CD8-positive, alpha-beta T cell (primary cell): ENCODE measurements at regions of chrX and their contacts with region 1.

Region 1: DNA sequence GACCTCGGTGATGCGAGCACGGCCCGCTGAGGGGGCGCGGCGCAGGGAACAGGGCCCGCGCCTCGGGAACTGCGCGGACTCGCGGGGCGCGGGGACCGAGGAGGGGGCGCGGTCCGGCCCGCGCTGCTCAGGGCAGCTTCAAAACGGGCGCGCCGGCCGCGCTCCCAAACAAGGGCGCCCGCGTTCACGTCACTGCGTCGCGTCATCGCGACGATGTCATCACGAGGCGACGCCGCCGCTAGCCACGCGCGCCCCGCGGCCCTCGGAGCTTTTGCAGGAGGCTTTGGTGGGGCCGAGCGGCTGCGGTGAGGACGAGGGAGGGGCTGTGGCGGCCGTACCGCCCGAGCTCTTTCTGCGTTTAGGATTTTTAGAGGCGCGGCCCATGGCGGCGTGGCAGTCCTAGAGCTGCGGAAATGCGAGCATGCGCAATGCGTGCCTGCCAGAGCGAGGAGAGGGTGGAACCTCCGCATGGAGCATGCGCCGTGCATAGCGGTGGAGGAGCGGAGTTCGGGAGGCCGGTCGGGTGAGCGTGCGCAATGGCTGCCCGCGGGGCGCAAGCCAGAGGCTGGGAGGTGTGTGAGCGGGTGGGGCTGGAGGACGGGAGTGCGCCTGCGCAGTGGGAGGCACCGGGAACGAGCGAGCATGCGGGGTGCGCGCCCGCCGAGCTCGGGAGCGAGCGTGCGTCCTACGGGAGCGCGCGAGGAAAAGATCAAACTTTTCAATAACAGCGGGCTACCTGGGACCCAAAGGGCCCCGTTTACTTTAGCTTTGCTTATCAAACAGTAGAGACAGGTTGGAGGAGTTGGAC is at the start of gene PPP2R3B:
- DNase-seq: peak; percentile 96 to 100 (median 99)
- ATAC-seq: peak; percentile 95
- H3K4me3 ChIP-seq: peak within 1 kb of the TSS; percentile 72 to 100
- H3K4me3 Mint-ChIP-seq: peak within 1 kb of the TSS; percentile 92
- H3K27ac ChIP-seq: peak within 1 kb of the TSS; percentile 100
- H3K27ac Mint-ChIP-seq: peak within 1 kb of the TSS; percentile 98
- H3K4me1 ChIP-seq: peaks cover 5% of the 10 kb centered on the region
- H3K4me1 Mint-ChIP-seq: peaks cover 13% of the 10 kb centered on the region
- H3K27me3 ChIP-seq: no peaks in the 10 kb centered on the region
- H3K27me3 Mint-ChIP-seq: no peaks in the 10 kb centered on the region
- CTCF ChIP-seq: no peak
- total RNA-seq, gene PPP2R3B: 17.6 to 19.5 TPM

Region 2: GRCh38 chrX:283115-283845 is 103.7 kb before region 1 on chrX:
- CTCF ChIA-PET with region 1: no interaction called
- POLR2A ChIA-PET with region 1: no interaction called
- intact Hi-C with region 1: loop called in 1 of 2 experiments (anchors 2 kb)
- DNase-seq: peak; percentile 78 to 94 (median 89)
- ATAC-seq: peak; percentile 99
- H3K4me3 ChIP-seq: peak overlapping the region; percentile 64 to 73
- H3K4me3 Mint-ChIP-seq: peak overlapping the region; percentile 91
- H3K27ac ChIP-seq: peak overlapping the region; percentile 54 to 61
- H3K27ac Mint-ChIP-seq: peak overlapping the region; percentile 90
- H3K4me1 ChIP-seq: peaks cover 18% of the 10 kb centered on the region
- H3K4me1 Mint-ChIP-seq: peaks cover 27% of the 10 kb centered on the region
- H3K27me3 ChIP-seq: no peaks in the 10 kb centered on the region
- H3K27me3 Mint-ChIP-seq: no peaks in the 10 kb centered on the region
- CTCF ChIP-seq: no peak

Region 3: DNA sequence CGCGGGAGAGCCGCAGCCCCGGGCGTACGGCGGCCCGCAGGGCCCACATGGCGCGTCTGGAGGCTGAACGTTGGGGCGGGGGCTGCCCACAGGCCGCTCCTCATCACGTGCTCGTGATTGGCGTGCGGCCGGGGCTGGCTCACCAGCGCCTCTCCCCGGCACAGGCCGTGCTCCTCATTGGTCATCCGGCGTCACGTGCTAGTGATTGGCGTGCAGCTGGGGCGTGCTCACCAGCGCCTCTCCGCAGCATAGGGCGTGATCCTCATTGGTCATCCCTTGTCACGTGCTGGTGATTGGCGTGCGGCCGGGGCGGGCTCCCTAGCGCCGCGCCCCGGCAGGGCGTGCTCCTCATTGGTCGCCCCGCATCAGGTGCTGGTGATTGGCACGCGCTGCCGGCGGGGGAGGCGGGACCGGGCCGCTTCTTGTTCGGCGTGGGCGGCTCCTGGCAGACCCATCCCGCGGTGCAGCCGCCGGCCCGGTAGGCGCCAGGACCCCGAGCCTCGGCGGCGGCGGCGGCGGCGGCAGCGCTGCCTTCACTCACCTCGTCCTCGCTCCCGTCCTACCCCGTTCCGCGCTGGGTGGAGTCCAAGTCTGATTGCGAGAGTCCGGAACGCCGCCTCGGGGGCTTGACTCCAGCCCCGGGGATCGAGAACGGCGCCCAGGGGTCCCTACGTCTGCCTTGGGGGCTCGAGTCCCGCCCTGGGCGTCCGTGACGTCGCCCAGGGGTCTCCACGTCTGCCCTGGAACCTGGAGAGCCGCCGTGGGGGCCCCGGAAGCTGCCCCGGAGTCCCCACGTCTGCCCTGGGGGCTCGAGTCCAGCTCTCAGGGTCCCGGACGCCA is 68.0 kb before region 1 on chrX and contains the start of gene GTPBP6:
- CTCF ChIA-PET with region 1: no interaction called
- POLR2A ChIA-PET with region 1: no interaction called
- intact Hi-C with region 1: loop called (anchors 1 kb)
- DNase-seq: peak; percentile 96 to 100 (median 98)
- ATAC-seq: peak; percentile 59
- H3K4me3 ChIP-seq: peak within 1 kb of the TSS; percentile 89 to 97
- H3K4me3 Mint-ChIP-seq: peak within 1 kb of the TSS; percentile 92
- H3K27ac ChIP-seq: peak within 1 kb of the TSS; percentile 95 to 96
- H3K27ac Mint-ChIP-seq: peak within 1 kb of the TSS; percentile 99
- H3K4me1 ChIP-seq: peaks cover 42% of the 10 kb centered on the region
- H3K4me1 Mint-ChIP-seq: peaks cover 25% of the 10 kb centered on the region
- H3K27me3 ChIP-seq: no peaks in the 10 kb centered on the region
- H3K27me3 Mint-ChIP-seq: no peaks in the 10 kb centered on the region
- CTCF ChIP-seq: no peak
- total RNA-seq, gene GTPBP6: 62.2 to 62.5 TPM

Region 4: DNA sequence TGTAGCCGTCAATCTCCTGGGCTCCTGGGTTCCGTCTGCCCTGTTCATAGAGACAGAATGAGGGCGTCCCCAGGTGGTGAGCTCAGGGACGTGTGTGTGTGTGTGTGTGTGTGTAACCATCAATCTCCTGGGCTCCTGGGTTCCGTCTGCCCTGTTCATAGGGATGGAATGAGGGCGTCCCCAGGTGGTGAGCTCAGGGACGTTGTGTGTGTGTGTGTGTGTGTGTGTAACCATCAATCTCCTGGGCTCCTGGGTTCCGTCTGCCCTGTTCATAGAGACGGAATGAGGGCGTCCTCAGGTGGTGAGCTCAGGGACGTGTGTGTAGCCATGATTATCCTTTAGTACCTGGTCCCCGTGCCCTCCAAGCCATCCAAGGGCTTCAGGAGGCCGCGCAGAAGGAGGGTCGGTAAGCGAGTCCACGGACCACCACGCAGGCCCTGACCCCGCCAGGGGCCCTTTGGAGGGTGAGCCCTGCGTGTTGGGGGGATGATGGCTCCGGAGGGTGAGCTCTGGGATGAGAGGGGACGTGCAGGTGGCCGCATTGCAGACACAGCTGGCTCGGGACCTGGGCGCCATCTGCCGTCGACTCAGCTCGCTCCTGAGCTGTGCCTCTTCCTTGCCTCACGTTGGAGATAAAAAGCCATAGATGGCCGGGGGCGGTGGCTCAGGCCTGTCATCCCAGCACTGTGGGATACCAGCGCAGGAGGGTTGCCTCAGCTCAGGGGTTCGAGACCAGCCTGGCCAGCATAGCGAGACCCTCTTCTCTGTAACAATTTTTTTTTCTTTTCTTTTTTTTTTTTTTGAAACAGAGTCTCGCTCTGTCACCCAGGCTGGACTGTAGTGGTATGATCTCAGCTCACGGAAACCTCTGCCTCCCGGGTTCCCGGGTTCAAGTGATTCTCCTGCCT is 63.0 kb before region 1 on chrX:
- CTCF ChIA-PET with region 1: no interaction called
- POLR2A ChIA-PET with region 1: no interaction called
- intact Hi-C with region 1: loop called (anchors 1 kb)
- DNase-seq: peak in 3 of 9 experiments; percentile 55 to 75 (median 69)
- ATAC-seq: peak; percentile 16
- H3K4me3 ChIP-seq: peak overlapping the region in 1 of 2 experiments; percentile 29
- H3K4me3 Mint-ChIP-seq: no peak overlapping the region
- H3K27ac ChIP-seq: no peak overlapping the region
- H3K27ac Mint-ChIP-seq: no peak overlapping the region
- H3K4me1 ChIP-seq: peaks cover 36% of the 10 kb centered on the region
- H3K4me1 Mint-ChIP-seq: peaks cover 23% of the 10 kb centered on the region
- H3K27me3 ChIP-seq: no peaks in the 10 kb centered on the region
- H3K27me3 Mint-ChIP-seq: no peaks in the 10 kb centered on the region
- CTCF ChIP-seq: no peak

Region 5: DNA sequence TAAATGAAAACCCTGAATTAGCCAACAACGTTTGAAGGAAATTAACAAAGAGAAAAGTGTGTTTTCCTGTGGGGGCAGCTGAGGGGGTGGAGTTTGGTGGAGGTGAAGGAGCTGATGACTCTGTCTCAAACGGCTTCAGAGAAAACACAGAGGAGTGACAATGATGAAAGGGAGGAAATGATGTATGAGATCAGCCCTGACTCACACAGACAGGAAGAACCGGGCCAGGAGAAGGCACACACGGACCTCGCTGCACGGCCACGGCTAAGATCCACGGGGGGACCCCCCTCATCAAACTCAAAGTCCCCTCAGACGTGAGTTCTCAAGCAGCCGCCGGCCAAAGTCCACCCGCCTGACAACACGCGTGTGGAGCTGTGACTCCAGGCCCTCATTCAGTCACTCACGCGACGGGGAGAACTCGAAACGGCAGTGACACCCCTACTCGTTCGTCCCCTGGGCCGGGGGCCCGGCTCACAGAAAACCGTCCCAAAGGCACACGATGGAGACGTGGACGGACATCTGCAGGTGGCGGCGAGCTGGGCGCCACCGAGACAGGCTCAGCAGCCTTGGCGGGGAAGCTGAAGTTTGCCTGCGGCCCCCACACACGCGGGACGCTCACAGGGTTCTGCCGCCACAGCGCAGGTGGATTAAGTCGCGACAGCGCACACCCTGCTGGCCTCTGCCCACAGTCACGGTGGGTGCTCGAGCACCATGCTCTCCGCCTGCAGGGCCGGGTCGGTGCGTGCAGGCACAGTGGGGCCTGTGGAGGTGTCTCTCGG is 29.1 kb before region 1 on chrX:
- CTCF ChIA-PET with region 1: no interaction called
- POLR2A ChIA-PET with region 1: no interaction called
- intact Hi-C with region 1: loop called (anchors 1 to 2 kb)
- DNase-seq: peak in 8 of 9 experiments; percentile 7 to 82 (median 54)
- ATAC-seq: peak; percentile 98
- H3K4me3 ChIP-seq: peak overlapping the region in 1 of 2 experiments; percentile 20
- H3K4me3 Mint-ChIP-seq: peak overlapping the region; percentile 60
- H3K27ac ChIP-seq: peak overlapping the region; percentile 62 to 81
- H3K27ac Mint-ChIP-seq: peak overlapping the region; percentile 96
- H3K4me1 ChIP-seq: peaks cover 23% of the 10 kb centered on the region
- H3K4me1 Mint-ChIP-seq: peaks cover 22% of the 10 kb centered on the region
- H3K27me3 ChIP-seq: no peaks in the 10 kb centered on the region
- H3K27me3 Mint-ChIP-seq: no peaks in the 10 kb centered on the region
- CTCF ChIP-seq: no peak

Region 6: GRCh38 chrX:427812-428725 is 41.1 kb after region 1 on chrX:
- CTCF ChIA-PET with region 1: no interaction called
- POLR2A ChIA-PET with region 1: no interaction called
- intact Hi-C with region 1: no loop called
- DNase-seq: no peak
- ATAC-seq: no peak
- H3K4me3 ChIP-seq: peak overlapping the region in 1 of 2 experiments; percentile 11
- H3K4me3 Mint-ChIP-seq: peak overlapping the region; percentile 29
- H3K27ac ChIP-seq: no peak overlapping the region
- H3K27ac Mint-ChIP-seq: no peak overlapping the region
- H3K4me1 ChIP-seq: peaks cover 5% of the 10 kb centered on the region
- H3K4me1 Mint-ChIP-seq: no peaks in the 10 kb centered on the region
- H3K27me3 ChIP-seq: peaks cover 0 to 3% of the 10 kb centered on the region in 2 experiments
- H3K27me3 Mint-ChIP-seq: peaks cover 26% of the 10 kb centered on the region
- CTCF ChIP-seq: no peak

Region 7: DNA sequence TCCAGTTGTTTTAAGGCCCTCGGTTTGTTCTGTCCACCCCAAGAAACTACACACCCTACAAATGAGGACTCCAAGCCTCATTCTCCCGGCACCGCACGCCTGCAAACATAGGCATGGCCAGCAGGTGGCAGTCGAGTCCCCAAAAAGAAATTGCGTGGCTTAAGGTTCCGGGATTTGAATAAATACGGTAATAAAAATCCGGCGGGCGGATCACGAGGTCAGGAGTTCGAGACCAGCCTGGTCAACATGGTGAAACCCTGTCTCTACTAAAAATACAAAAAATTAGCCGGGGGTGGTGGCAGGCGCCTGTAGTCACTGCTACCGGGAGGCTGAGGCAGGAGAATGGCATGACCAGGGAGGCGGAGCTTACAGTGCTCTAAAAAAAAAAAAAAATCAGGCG is 859.8 kb after region 1 on chrX:
- CTCF ChIA-PET with region 1: no interaction called
- POLR2A ChIA-PET with region 1: no interaction called
- intact Hi-C with region 1: loop called in 1 of 2 experiments (anchors 10 kb)
- DNase-seq: peak; percentile 59 to 89 (median 74)
- ATAC-seq: peak; percentile 67
- H3K4me3 ChIP-seq: no peak overlapping the region
- H3K4me3 Mint-ChIP-seq: no peak overlapping the region
- H3K27ac ChIP-seq: no peak overlapping the region
- H3K27ac Mint-ChIP-seq: peak overlapping the region; percentile 27
- H3K4me1 ChIP-seq: peaks cover 16% of the 10 kb centered on the region
- H3K4me1 Mint-ChIP-seq: peaks cover 15% of the 10 kb centered on the region
- H3K27me3 ChIP-seq: no peaks in the 10 kb centered on the region
- H3K27me3 Mint-ChIP-seq: no peaks in the 10 kb centered on the region
- CTCF ChIP-seq: peak; percentile 75